HEK293 (cell line): ENCODE measurements at regions of chr6 and their contacts with region 1.

Region 1: DNA sequence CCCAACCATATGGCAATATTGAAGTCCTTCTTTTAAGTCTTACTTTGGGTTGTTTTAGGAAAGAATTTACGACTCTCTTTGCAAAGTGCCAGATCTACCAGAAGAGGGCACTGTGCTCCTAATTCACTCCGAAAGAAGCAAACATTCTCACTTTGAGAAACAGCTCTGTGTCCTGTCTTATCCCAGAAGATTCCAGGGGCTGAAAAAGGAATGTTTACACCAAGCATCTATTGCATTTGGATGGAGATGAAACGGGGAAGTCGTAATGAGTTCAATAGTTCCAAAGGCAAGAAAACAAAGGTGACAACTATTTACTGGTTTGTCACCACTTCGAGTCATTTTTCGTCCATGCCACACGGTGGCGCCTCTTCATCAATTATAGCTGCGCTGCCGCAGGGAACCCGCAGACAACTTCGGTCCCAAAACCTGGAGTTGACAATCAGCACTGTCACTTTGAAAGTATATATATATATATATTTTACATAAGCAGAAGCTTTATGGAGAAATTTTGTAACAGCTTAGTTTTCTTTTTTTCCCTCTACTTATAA is 121.6 kb downstream of the MOXD1 start:
- H3K4me3 ChIP-seq: peak overlapping the region; percentile 46
- H3K27ac ChIP-seq: no peak overlapping the region
- H3K4me1 ChIP-seq: no peaks in the 10 kb centered on the region
- CTCF ChIP-seq: peak; percentile 85

Region 2: GRCh38 chr6:131929264-131929663 is 350.4 kb before region 1 on chr6:
- CTCF ChIA-PET with region 1: interaction called, 117 read pairs
- POLR2A ChIA-PET with region 1: no interaction called
- H3K4me3 ChIP-seq: no peak overlapping the region
- H3K27ac ChIP-seq: no peak overlapping the region
- H3K4me1 ChIP-seq: no peaks in the 10 kb centered on the region
- CTCF ChIP-seq: no peak

Region 3: GRCh38 chr6:132259070-132259469 is 20.6 kb before region 1 on chr6:
- CTCF ChIA-PET with region 1: interaction called, 176 read pairs
- POLR2A ChIA-PET with region 1: no interaction called
- H3K4me3 ChIP-seq: no peak overlapping the region
- H3K27ac ChIP-seq: no peak overlapping the region
- H3K4me1 ChIP-seq: no peaks in the 10 kb centered on the region
- CTCF ChIP-seq: peak; percentile 33; the same call in 1 of the 2 replicates

Region 4: GRCh38 chr6:132405143-132405915 is 125.7 kb after region 1 on chr6:
- CTCF ChIA-PET with region 1: interaction called, 17 read pairs
- POLR2A ChIA-PET with region 1: no interaction called
- H3K4me3 ChIP-seq: no peak overlapping the region
- H3K27ac ChIP-seq: no peak overlapping the region
- H3K4me1 ChIP-seq: peaks cover 16% of the 10 kb centered on the region
- CTCF ChIP-seq: no peak

Region 5: GRCh38 chr6:132483779-132484679 is 204.4 kb after region 1 on chr6:
- CTCF ChIA-PET with region 1: interaction called, 289 read pairs
- POLR2A ChIA-PET with region 1: interaction called, 3 read pairs
- H3K4me3 ChIP-seq: no peak overlapping the region
- H3K27ac ChIP-seq: no peak overlapping the region
- H3K4me1 ChIP-seq: peaks cover 5% of the 10 kb centered on the region
- CTCF ChIP-seq: peak; percentile 53

Region 6: GRCh38 chr6:132537145-132537544 is 257.5 kb after region 1 on chr6:
- CTCF ChIA-PET with region 1: interaction called, 12 read pairs
- POLR2A ChIA-PET with region 1: no interaction called
- H3K4me3 ChIP-seq: no peak overlapping the region
- H3K27ac ChIP-seq: no peak overlapping the region
- H3K4me1 ChIP-seq: no peaks in the 10 kb centered on the region
- CTCF ChIP-seq: no peak